K562 (cell line): ENCODE measurements at regions of chr22 and their contacts with region 1.

Region 1: GRCh38 chr22:41682033-41682807 is 6.4 kb downstream of the SNU13 start:
- DNase-seq: peak; percentile 85 to 94 (median 90)
- ATAC-seq: peak; percentile 94
- H3K4me3 ChIP-seq: peak overlapping the region; percentile 65
- H3K27ac ChIP-seq: peak overlapping the region; percentile 91
- H3K4me1 ChIP-seq: peaks cover 0 to 13% of the 10 kb centered on the region in 2 experiments; a peak in 2 of 5 replicates
- H3K27me3 ChIP-seq: no peaks in the 10 kb centered on the region
- CTCF ChIP-seq: no peak
- EP300 ChIP-seq: peak; percentile 15; the same call in 1 of the 2 replicates
- POLR2A ChIP-seq: peak; percentile 92
- RAD21 ChIP-seq: no peak

Region 2: DNA sequence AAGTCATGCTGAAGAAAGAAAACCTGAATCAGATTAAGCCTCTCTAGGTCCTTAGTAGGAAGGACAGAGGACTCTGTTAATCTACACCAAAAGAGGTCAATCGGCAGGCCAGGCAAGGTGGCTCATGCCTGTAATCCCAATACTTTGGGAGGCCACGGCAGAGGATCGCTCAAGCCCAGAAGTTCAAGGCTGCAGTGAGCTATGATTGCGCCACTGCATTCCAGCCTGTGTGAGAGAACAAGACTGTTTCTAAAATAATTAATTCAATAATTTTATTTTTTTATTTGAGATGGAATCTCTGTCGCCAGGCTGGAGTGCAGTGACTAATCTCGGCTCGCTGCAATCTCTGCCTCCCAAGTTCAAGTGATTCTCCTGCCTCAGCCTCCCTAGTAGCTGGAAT is 56.6 kb before region 1 on chr22:
- CTCF ChIA-PET with region 1: no interaction called
- POLR2A ChIA-PET with region 1: no interaction called
- in situ Hi-C with region 1: no loop called
- intact Hi-C with region 1: no loop called
- DNase-seq: no peak
- ATAC-seq: no peak
- H3K4me3 ChIP-seq: no peak overlapping the region
- H3K27ac ChIP-seq: no peak overlapping the region
- H3K4me1 ChIP-seq: peaks cover 2 to 5% of the 10 kb centered on the region in 2 experiments; a peak in 4 of 5 replicates
- H3K27me3 ChIP-seq: no peaks in the 10 kb centered on the region
- CTCF ChIP-seq: no peak
- EP300 ChIP-seq: no peak
- POLR2A ChIP-seq: no peak
- RAD21 ChIP-seq: no peak

Region 3: GRCh38 chr22:41666661-41667258 is 15.5 kb before region 1 on chr22:
- CTCF ChIA-PET with region 1: no interaction called
- POLR2A ChIA-PET with region 1: interaction called, 11 read pairs
- in situ Hi-C with region 1: no loop called
- intact Hi-C with region 1: no loop called
- DNase-seq: peak; percentile 91 to 96 (median 94)
- ATAC-seq: peak; percentile 93
- H3K4me3 ChIP-seq: peak overlapping the region; percentile 30; the same call in 1 of the 2 replicates
- H3K27ac ChIP-seq: peak overlapping the region; percentile 94
- H3K4me1 ChIP-seq: peaks cover 6 to 14% of the 10 kb centered on the region in 2 experiments; a peak in 3 of 5 replicates
- H3K27me3 ChIP-seq: no peaks in the 10 kb centered on the region
- CTCF ChIP-seq: peak; percentile 95 to 100 (median 100)
- EP300 ChIP-seq: no peak
- POLR2A ChIP-seq: peak; percentile 85
- RAD21 ChIP-seq: peak; percentile 57 to 72